GM12878 (cell line): ENCODE measurements at regions of chr11 and their contacts with region 1.

Region 1: DNA sequence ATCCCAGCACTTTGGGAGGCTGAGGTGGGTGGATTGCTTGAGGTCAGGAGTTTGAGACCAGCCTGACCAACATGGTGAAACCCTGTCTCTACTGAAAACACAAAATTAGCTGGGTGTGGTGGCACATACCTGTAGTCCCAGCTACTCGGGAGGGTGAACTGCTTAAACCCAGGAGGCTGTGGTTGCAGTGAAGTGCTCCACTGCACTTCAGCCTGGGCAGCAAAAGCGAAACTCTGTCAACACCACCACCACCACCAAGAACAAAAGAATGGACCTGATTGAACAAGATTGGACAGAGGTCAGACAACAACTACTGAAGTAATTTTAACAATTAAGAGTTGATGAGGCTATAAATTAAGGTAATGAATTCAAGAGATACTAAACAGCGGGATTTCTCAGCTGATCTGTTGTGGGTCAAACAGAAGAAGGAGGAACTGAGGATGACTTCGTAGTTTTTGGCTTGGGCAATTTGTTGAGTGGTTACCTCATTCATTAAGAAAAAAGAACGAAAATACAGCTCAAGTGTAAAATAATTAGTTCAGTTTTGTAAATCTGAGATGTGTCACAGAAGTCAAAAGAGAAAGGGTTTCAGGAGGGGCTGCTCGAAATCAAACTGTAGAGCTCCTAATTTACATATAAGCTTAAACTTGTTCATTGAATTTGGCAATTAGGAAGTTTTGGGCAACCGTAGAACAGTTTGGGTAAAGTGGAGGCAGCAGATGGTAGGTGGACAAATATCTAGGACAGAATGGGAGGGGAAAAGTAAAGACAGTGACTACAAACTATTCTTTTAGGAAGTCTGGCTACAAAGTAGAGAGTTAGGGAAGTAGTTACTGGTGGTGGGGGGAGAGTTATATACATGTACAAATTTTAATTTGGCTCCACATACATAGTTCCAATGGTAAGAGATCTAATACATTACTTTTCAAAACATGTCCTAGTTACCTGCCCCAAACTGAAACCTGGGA is 4.5 kb downstream of the IL18 start:
- DNase-seq: no peak
- ATAC-seq: peak; percentile 96
- H3K4me3 ChIP-seq: no peak overlapping the region
- H3K27ac ChIP-seq: no peak overlapping the region
- H3K4me1 ChIP-seq: no peaks in the 10 kb centered on the region
- H3K27me3 ChIP-seq: no peaks in the 10 kb centered on the region
- CTCF ChIP-seq: no peak
- EP300 ChIP-seq: no peak
- POLR2A ChIP-seq: no peak
- RAD21 ChIP-seq: no peak

Region 2: DNA sequence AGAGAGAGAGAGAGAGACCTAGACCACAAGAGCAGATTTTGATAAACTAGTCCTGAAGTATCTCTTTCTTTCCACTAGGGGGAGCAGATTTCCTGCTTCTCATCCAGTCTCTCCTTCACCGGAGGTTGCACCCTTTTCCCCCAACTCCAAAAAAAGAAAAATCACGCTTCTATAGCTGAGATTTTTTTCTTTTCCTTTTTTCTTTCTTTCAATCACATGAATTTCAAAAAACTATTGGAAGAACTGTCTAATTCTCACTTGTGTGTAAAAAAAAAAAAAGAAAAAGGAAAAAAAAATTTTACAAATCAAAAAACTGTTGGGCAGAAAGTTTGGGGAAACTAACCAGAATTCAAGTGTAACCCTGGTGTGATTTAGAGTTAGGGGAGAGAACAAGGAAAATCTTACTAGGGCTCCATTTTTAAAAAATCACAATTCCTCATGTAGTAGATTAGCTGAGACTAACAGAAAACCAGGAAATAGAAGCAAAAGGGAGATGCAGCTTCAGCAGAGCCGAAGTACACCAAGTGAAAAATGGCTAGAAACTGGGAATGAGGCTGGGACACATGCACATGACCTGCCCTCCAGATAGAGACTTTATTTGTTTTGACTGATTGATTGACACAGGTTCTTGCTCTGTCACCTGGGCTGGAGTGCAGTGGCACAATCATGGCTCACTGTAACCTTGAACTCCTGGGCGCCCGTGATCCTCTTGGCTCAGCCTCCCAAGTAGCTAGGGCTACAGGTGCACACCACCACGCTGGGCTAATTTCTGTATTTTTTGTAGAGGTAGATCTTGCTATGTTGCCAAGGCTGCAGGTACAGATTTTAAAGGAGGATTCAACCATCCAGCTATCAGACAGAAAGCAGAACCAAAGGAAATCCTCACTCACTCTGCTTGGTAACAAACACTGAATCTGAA is 45.6 kb before region 1 on chr11:
- CTCF ChIA-PET with region 1: interaction called, 10 read pairs
- POLR2A ChIA-PET with region 1: no interaction called
- RAD21 ChIA-PET with region 1: no interaction called
- SMC1A ChIA-PET with region 1: interaction called, 3 read pairs
- in situ Hi-C with region 1: no loop called
- intact Hi-C with region 1: no loop called
- DNase-seq: no peak
- ATAC-seq: peak; percentile 74
- H3K4me3 ChIP-seq: no peak overlapping the region
- H3K27ac ChIP-seq: no peak overlapping the region
- H3K4me1 ChIP-seq: no peaks in the 10 kb centered on the region; the same call in 1 of the 2 replicates
- H3K27me3 ChIP-seq: no peaks in the 10 kb centered on the region
- CTCF ChIP-seq: peak; percentile 53 to 70 (median 59)
- EP300 ChIP-seq: no peak
- POLR2A ChIP-seq: no peak
- RAD21 ChIP-seq: peak; percentile 69